ENCODE measurements at regions of chr10 and their contacts with region 1.

Region 1: GRCh38 chr10:79374312-79375191 is 27.3 kb downstream of the PPIF start:
- DNase-seq: peak; percentile 63
- ATAC-seq: peak; percentile 82
- H3K4me3 Mint-ChIP-seq: no peak overlapping the region
- H3K27ac Mint-ChIP-seq: no peak overlapping the region
- H3K4me1 Mint-ChIP-seq: peaks cover 3% of the 10 kb centered on the region
- H3K27me3 Mint-ChIP-seq: no peaks in the 10 kb centered on the region
- CTCF ChIP-seq: peak; percentile 73

Region 2: DNA sequence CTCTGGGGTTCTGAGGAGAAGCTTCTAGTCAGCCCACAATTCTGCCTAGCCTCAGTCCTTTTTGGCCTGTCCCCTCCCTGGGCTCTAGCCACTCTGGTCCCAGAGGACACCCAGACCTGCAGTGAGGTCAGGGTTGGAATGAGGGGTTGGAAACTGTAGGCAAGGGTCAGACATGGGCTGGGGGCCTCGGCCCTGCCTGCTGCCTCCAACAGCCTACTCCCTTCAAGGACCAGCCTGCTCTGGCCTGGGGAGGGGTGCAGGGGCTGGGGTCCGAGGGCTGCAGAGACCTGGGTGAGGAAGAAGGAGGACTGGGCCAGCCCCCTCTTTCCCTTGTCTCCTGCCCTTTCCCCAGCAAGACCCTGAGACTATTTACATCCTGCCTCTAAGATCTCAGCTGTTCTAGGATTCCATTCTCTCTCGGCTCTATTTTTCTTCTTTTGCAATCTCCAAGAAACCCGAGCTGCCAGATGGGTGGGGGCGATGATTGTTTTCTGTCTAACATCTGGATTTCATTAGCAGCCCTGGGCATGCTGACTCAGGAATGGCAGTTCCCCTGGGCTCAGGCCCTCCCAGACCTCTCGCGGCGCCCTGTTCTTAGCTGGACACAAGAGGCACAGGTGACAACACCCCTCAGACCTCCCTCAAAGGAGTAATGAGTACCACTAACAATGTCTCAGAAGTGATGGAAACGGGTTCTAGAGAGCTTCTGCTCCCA is 47.8 kb after region 1 on chr10:
- CTCF ChIA-PET with region 1: no interaction called
- POLR2A ChIA-PET with region 1: no interaction called
- intact Hi-C with region 1: no loop called
- DNase-seq: no peak
- ATAC-seq: no peak
- H3K4me3 Mint-ChIP-seq: no peak overlapping the region
- H3K27ac Mint-ChIP-seq: no peak overlapping the region
- H3K4me1 Mint-ChIP-seq: peaks cover 5% of the 10 kb centered on the region
- H3K27me3 Mint-ChIP-seq: no peaks in the 10 kb centered on the region
- CTCF ChIP-seq: no peak

Region 3: GRCh38 chr10:79445141-79445976 is 70.8 kb after region 1 on chr10 and contains the start of gene ZCCHC24:
- CTCF ChIA-PET with region 1: no interaction called
- POLR2A ChIA-PET with region 1: no interaction called
- intact Hi-C with region 1: loop called (anchors 5 kb)
- DNase-seq: peak; percentile 92
- ATAC-seq: peak; percentile 93
- H3K4me3 Mint-ChIP-seq: peak within 1 kb of the TSS; percentile 87
- H3K27ac Mint-ChIP-seq: peak within 1 kb of the TSS; percentile 50
- H3K4me1 Mint-ChIP-seq: peaks cover 26% of the 10 kb centered on the region
- H3K27me3 Mint-ChIP-seq: peaks cover 2% of the 10 kb centered on the region
- CTCF ChIP-seq: no peak
- total RNA-seq, gene ZCCHC24: 1.1 and 1.3 TPM in 2 replicates

Region 4: GRCh38 chr10:79463578-79464496 is 89.3 kb after region 1 on chr10:
- CTCF ChIA-PET with region 1: interaction called, 36 read pairs
- POLR2A ChIA-PET with region 1: no interaction called
- intact Hi-C with region 1: loop called (anchors 1 kb)
- DNase-seq: no peak
- ATAC-seq: no peak
- H3K4me3 Mint-ChIP-seq: no peak overlapping the region
- H3K27ac Mint-ChIP-seq: no peak overlapping the region
- H3K4me1 Mint-ChIP-seq: no peaks in the 10 kb centered on the region
- H3K27me3 Mint-ChIP-seq: peaks cover 9% of the 10 kb centered on the region
- CTCF ChIP-seq: no peak

Region 5: DNA sequence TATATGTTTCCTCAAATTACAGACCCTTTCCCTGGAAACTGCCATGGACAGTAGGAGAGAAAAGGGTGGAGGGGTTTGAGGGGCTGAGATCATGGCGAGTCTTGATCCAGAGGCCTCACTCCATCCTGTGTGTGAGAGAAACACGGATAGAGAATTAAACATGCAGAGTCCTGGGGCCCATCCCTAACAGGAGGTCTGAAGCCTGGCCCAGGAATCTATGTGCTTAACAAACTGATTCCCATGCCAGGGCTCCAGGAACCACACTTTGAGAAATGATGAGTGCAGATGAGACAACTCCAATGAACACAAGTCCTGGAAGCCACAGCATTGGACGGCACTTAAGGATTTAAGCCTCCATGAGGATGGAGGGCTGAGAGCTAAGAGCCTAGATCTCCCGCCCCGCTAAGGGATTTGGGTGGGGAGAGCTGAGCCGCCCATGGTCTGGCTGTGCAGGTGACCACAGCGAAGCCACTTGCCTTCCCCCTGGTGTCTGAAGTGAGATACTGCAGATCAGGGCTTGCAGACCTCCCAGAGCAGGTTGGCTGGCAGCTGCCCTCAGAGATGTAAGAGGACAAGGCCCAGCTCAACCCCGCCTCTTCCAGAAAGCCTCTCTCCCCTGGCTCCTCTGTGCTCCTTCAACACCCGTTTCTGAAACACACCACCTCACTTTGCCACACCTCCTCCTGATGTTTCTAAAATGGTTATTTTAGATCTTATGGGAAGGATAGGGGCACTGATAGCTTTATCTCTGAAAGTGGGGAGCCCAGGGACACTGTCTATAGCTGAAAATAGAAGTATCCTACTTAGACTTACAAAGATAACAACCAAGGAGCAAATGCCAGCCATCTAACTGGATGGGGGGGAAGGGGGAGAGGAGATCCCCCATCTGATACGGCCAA is 113.0 kb after region 1 on chr10:
- CTCF ChIA-PET with region 1: interaction called, 88 read pairs
- POLR2A ChIA-PET with region 1: interaction called, 3 read pairs
- intact Hi-C with region 1: loop called (anchors 1 kb)
- DNase-seq: no peak
- ATAC-seq: peak; percentile 83
- H3K4me3 Mint-ChIP-seq: no peak overlapping the region
- H3K27ac Mint-ChIP-seq: no peak overlapping the region
- H3K4me1 Mint-ChIP-seq: no peaks in the 10 kb centered on the region
- H3K27me3 Mint-ChIP-seq: peaks cover 2% of the 10 kb centered on the region
- CTCF ChIP-seq: no peak

Measured in activated B cell treated with CpG ODN at 0.5 μM for 24 hours (primary cell).